ENCODE measurements at regions of chr3 and their contacts with region 1.

Region 1: DNA sequence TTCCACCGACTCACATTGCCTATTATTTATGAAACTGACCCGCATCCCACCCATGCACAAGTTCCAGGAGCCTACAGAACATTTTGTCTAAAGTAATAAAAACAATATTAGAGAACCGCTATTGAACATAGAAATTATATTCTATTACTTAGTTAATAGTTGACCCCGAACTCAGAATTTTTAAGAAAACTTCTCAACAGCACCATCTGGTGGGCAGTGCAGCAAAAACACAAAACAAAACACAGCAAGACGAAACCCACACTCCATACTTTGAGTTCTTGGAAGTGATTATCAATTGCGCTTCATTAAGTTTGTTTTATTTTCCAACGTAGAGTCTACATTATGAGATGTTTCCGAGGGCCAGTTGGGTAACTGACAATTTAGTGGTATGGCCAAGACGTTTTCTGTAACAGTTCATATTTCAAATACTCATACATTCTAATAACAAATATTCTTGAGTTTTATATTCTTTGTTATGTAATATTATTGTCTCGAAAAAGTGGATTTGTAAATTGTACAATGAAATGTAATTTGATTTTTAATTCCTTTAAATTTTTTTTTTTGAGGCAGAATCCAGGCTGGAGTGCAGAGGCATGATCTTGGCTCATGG is 24.0 kb upstream of the C3orf70 start:
- DNase-seq: no peak
- ATAC-seq: no peak

Region 2: DNA sequence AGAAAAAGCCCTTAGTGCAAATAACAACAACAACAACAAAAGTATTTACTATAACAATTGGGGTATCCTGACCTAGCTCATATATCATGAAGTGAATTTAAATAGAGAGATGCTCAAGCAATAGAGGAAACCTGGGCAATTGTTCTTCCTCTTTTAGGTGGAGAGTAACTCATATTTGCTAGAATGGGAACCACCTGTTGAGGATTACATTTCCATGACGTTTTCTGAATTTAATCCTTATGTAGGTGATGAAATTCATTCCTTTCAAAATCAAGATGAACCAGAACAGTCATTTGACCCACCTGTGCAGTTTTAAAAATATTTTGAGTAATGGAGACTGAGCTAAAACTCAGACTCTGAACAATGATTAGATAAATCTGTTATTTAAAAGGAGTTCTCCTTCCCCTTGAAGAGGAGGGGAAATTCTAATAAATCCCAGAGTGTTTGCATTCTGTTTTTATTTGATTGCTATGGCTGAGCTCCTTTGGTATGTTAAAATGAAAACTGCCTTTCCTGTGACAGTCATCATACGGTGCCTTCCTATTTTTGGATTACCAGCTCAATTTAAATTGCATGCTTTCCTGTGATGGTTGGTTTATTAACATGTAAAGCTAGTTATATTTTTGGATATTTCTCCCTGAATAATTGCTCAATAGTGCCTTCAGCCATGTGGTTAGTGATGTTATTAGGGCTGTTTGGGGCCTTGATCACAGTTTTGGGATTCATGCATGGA is 340.6 kb before region 1 on chr3:
- intact Hi-C with region 1: no loop called
- DNase-seq: no peak
- ATAC-seq: no peak

Region 3: DNA sequence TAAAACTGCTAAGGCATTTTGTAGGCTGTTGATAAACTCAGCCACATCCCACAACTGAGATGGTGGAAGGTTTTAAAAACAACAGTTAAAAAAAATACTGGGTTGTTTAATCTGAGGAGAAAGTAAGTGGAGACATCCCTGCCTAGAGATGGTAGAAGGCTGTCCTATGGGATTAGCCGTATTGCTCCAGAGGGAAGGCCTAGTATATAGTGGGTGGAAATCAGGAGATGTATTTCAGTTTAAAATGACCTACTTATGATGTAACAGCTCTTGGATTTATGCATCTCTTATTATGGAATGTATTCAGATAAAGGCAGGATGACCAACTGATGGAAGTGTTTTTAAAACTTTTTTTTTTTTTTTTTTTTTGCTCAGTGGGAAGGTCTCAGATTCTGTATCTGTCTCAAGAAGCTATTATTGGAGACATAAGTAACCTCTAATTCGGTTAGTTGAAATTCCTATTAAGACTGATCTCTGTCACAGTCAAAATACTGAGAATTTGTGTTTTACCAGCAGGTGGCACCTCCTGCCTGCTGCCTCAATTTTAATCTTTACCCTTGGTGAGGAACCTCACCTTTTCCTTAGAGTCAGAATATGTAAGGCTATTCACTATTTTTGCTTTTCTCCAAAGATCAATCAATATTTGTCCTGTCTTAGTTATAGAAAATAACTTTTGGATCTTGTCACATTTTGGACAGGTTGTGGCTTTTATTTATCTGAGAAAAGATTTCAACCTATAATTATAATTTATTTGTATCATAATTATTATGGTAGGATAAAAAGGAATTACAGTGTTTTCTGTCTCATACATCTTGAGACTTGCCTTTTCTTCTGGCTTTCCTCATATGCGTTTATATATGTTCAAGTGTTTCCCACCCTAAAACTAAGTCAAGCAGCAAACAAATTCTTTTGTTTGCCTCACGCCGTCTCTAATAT is 301.9 kb before region 1 on chr3:
- intact Hi-C with region 1: loop called (anchors 10 kb)
- DNase-seq: no peak
- ATAC-seq: peak; percentile 28

Region 4: GRCh38 chr3:185233328-185233727 is 56.5 kb after region 1 on chr3:
- intact Hi-C with region 1: no loop called
- DNase-seq: no peak
- ATAC-seq: no peak